Posterior vena cava (tissue), 2 donors: ENCODE measurements at regions of chr19 and their contacts with region 1.

Region 1: DNA sequence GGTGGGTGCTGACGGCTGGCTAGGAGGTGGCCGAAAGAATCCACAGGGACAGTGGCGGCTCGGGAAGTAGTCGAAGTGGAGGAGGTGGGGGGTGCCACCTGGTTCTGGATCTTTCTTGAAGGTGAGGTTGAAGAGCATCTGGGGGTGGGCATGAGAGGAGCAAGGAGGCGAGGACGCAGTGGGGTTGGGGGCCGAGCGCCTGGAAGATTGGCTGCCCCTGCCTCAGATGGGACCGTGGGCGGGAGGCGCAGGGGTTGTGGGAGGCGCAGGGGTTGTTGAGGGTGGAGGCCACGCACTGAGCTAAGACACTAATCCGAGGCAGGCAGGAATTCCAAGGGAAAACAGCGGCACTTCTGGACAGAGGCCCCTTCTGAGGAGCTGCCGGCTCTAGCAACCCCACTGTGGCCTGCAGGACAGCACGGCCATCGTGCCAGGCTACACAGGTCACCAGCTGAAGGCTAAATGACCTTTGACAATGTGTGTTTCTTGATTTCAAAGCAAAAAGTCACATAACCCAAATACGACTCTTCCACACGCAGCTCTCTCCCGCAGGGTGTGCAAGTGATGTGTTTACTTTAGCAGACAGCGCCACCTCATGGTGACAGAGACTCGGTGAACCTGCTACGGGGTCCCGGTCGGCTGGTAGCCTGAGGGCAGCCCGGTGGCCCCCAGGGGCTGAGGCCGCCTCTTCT is 44.1 kb upstream of the RANBP3 start:
- DNase-seq: peak; percentile 88

Region 2: GRCh38 chr19:6424939-6425731 is 403.1 kb after region 1 on chr19:
- intact Hi-C with region 1: loop called in 1 of 2 experiments (anchors 5 kb)
- DNase-seq: peak; percentile 98